ENCODE measurements at regions of chr2 and their contacts with region 1.

Region 1: GRCh38 chr2:176126929-176127773 is 2.4 kb upstream of the HOXD8 start:
- DNase-seq: peak; percentile 63
- H3K4me3 ChIP-seq: peak overlapping the region; percentile 19 to 25; a peak in 1 of 4 replicates
- H3K27ac ChIP-seq: no peak overlapping the region; a peak in 1 of 4 replicates
- H3K4me1 ChIP-seq: peaks cover 4 to 20% of the 10 kb centered on the region in 2 experiments; a peak in 3 of 4 replicates
- H3K27me3 ChIP-seq: no peaks in the 10 kb centered on the region; the same call in 1 of the 2 replicates
- CTCF ChIP-seq: peak; percentile 97
- EP300 ChIP-seq: no peak; a peak in 1 of 4 replicates
- RAD21 ChIP-seq: peak; percentile 94

Region 2: DNA sequence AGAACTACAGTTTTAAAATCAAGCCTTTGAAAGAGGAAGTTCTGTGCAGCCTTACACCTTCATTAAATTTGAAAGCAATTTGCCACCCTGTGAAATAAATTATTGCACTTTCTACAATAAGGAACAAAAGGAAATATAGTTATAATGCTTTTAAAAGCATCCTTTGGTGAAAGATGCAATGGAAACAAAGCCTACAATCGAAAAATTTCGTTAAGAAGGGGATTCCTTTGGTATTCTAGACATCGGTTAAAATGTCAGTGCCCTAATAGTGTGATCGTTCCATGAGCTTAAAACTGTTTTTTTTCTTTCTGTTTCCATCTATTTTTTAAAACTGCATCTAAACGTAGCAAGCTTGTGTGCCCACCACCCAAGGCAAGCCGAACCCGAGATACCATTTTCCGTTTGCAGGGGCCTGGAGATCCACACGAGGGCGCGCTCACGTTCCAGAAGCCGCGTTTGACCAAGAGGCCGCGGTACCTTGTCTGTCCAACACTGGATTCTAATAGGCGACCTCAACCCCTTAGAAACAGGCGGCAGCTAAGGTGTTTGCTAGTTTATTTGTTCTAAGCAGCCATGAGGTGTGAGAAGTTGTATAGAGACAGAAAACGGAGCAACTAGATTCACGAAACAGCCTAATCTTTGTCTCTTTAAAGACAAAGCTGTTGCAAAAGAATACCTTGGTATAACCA is 16.0 kb before region 1 on chr2:
- CTCF ChIA-PET with region 1: interaction called, 138 read pairs
- POLR2A ChIA-PET with region 1: interaction called, 3 read pairs
- DNase-seq: peak; percentile 88
- H3K4me3 ChIP-seq: peak overlapping the region in 1 of 2 experiments; percentile 19; a peak in 1 of 4 replicates
- H3K27ac ChIP-seq: no peak overlapping the region
- H3K4me1 ChIP-seq: peaks cover 0 to 4% of the 10 kb centered on the region in 2 experiments; a peak in 2 of 4 replicates
- H3K27me3 ChIP-seq: peaks cover 70% of the 10 kb centered on the region
- CTCF ChIP-seq: peak; percentile 90
- EP300 ChIP-seq: no peak
- RAD21 ChIP-seq: peak; percentile 65

Region 3: DNA sequence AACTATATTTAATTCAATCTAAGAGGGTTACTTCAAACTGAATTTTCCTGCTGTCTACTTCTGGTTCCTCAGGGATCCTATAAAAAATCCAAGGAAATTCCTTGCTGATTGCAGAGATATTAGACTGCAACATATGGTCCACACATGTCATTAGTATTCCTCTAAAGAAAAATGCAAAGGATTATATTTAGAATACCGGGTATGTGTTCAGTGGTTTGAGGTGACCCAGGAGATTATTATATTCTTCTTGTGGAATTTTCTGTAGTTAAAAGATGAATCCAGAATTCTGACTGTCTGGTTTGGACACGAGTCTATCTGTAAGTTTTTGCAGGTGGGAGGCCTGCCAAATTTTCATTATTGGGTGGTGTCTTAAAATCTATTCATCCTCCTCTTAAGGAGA is 79.5 kb after region 1 on chr2:
- CTCF ChIA-PET with region 1: no interaction called
- POLR2A ChIA-PET with region 1: no interaction called
- DNase-seq: no peak
- H3K4me3 ChIP-seq: no peak overlapping the region
- H3K27ac ChIP-seq: no peak overlapping the region
- H3K4me1 ChIP-seq: no peaks in the 10 kb centered on the region
- H3K27me3 ChIP-seq: no peaks in the 10 kb centered on the region; the same call in 1 of the 2 replicates
- CTCF ChIP-seq: no peak
- EP300 ChIP-seq: no peak
- RAD21 ChIP-seq: no peak

Region 4: GRCh38 chr2:176445956-176446355 is 318.8 kb after region 1 on chr2:
- CTCF ChIA-PET with region 1: interaction called, 10 read pairs
- POLR2A ChIA-PET with region 1: no interaction called
- DNase-seq: no peak
- H3K4me3 ChIP-seq: no peak overlapping the region
- H3K27ac ChIP-seq: no peak overlapping the region
- H3K4me1 ChIP-seq: no peaks in the 10 kb centered on the region; a peak in 1 of 4 replicates
- H3K27me3 ChIP-seq: no peaks in the 10 kb centered on the region
- CTCF ChIP-seq: no peak
- EP300 ChIP-seq: no peak
- RAD21 ChIP-seq: no peak

Region 5: DNA sequence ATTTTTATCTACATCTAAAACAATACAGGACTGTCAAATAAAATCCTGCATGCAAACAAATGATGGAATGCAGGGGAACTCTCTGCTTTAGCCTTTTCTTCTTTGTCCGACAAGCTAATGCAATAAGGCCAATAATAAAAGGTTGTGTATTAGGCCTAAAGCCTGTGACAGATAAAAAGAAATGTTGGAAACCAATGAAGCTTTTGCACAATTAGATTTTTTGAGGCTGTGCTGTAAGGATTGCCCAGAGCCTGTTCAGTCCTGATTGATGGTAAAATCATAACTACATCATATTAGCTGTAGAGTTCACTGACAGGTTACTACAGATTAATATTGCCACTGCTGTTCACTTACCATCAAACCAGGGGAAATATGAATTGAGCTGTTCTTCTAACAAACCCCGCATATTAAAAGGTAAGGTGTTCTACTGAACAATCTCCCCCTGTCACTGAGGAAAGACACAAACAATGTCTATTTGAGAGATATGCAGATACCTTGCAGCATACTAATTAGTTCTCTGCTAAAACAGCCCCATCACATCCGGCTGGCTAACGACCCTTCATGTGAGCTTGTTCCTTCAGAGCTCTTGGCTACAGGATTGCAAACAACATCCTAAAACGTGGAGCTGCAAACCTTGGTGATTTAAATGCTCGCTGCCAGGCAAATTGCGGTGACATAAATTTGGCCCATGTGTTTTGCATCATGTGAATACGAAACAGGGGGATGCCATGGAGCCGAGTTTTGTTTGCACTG is 447.5 kb after region 1 on chr2:
- CTCF ChIA-PET with region 1: interaction called, 9 read pairs
- POLR2A ChIA-PET with region 1: interaction called, 34 read pairs
- DNase-seq: peak; percentile 59
- H3K4me3 ChIP-seq: no peak overlapping the region; a peak in 1 of 4 replicates
- H3K27ac ChIP-seq: peak overlapping the region; percentile 39 to 99; a peak in 3 of 4 replicates
- H3K4me1 ChIP-seq: peaks cover 7 to 45% of the 10 kb centered on the region in 2 experiments
- H3K27me3 ChIP-seq: no peaks in the 10 kb centered on the region
- CTCF ChIP-seq: no peak
- EP300 ChIP-seq: peak; percentile 83 to 100
- RAD21 ChIP-seq: peak; percentile 42